Left lung (tissue), 14 donors: ENCODE measurements at regions of chr20 and their contacts with region 1.

Region 1: DNA sequence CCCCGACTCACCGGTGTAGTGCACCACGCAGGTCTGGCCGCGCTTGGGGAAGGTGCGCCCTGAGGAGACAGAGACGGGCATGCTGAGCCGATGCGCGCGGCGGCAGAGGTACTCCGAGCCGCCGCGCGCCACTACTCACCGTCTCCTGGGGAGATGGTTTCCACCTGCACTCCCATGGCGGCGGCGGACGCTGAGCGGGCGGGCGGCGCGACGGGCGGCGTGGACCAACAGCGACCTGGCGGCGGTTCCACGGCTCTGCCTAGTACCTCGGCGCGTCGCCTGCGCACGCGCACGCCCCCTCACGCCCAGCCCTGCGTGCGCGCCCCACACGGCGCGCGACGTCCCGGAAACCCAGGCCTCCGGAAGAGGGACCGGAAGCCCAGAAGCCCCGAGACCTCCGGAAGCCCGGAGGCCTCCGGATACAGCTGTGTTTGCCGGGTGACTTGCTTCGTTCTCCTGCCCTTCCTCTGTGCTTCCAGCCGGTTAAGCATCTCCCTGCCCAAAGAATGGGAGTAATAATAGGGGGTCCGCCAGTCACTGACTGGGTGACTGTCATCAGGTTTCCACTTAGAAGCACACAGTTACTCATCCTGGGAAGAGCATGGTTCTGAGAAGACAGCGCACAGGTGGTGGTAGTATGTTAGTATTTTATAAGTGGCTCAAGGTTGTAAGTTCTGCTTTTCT is at the start of gene FKBP1A:
- DNase-seq: peak; percentile 90 to 97 (median 94)
- ATAC-seq: peak; percentile 95
- H3K4me3 ChIP-seq: peak within 1 kb of the TSS; percentile 83 to 95
- H3K27ac ChIP-seq: peak within 1 kb of the TSS; percentile 85 to 89
- H3K4me1 ChIP-seq: peaks cover 18 to 83% of the 10 kb centered on the region in 2 donors
- H3K27me3 ChIP-seq: peaks cover 0 to 7% of the 10 kb centered on the region in 2 donors
- CTCF ChIP-seq: peak in 1 of 2 donors; percentile 37
- polyA plus RNA-seq, gene FKBP1A: 400 to 507 (median 446) TPM

Region 2: DNA sequence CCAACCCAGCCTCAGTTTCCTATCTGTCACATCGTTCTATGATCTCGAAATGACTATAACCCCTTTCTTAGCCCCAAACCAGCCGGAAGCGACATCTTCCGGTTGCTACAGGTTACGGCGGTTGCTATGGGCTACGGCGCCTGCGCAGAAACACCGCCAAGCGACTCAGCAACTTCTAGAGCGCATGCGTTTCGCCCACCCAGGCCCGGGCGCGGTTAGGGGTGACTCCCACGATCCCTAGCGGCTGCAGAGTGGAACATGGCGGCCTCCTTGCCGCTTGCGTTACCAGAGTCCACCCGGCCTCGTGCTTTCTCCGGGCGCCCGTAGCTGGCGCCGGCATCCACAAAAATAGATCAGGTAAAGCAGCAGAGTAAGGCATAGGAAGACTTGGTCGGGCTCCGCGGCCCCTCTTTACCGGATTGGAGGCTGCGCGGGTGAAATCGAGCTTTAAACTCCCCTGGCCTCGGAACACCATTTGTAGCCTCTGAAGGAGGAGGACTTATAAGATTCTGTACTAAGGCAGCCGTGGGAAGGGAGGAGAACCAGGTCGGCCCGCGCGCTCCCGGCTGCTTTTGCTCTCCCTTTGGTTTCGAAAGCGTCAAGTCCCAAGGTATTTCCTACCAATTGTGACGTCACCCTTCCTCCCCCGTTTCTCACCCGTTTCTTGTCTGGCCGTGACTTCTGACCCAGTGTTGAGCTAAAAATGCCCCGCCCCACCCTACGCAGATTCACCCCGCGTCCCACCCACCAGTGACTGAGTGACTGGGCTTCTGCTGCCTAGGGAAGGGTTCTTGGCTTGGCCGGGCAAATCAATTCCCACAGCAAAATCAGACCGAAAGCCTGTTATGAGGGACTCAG is 67.6 kb before region 1 on chr20:
- intact Hi-C with region 1: loop called (anchors 5 to 10 kb)
- DNase-seq: peak; percentile 96 to 99 (median 98)
- ATAC-seq: peak; percentile 91
- H3K4me3 ChIP-seq: peak overlapping the region; percentile 72 to 82
- H3K27ac ChIP-seq: peak overlapping the region; percentile 98 to 99
- H3K4me1 ChIP-seq: peaks cover 35 to 83% of the 10 kb centered on the region in 2 donors
- H3K27me3 ChIP-seq: no peaks in the 10 kb centered on the region
- CTCF ChIP-seq: peak in 1 of 2 donors; percentile 51

Region 3: GRCh38 chr20:1555952-1556351 is 163.0 kb after region 1 on chr20:
- intact Hi-C with region 1: no loop called
- DNase-seq: no peak
- ATAC-seq: no peak
- H3K4me3 ChIP-seq: no peak overlapping the region
- H3K27ac ChIP-seq: no peak overlapping the region
- H3K4me1 ChIP-seq: no peaks in the 10 kb centered on the region
- H3K27me3 ChIP-seq: no peaks in the 10 kb centered on the region
- CTCF ChIP-seq: no peak

Region 4: GRCh38 chr20:1600736-1601135 is 207.8 kb after region 1 on chr20:
- intact Hi-C with region 1: no loop called
- DNase-seq: no peak
- ATAC-seq: no peak
- H3K4me3 ChIP-seq: no peak overlapping the region
- H3K27ac ChIP-seq: no peak overlapping the region
- H3K4me1 ChIP-seq: no peaks in the 10 kb centered on the region
- H3K27me3 ChIP-seq: no peaks in the 10 kb centered on the region
- CTCF ChIP-seq: no peak